HAP-1 (cell line): ENCODE measurements at regions of chr10 and their contacts with region 1.

Region 1: GRCh38 chr10:110151467-110151866 is 55.9 kb upstream of the MXI1 start:
- DNase-seq: no peak
- H3K4me3 ChIP-seq: no peak overlapping the region
- H3K4me1 ChIP-seq: no peaks in the 10 kb centered on the region
- H3K27me3 ChIP-seq: no peaks in the 10 kb centered on the region

Region 2: DNA sequence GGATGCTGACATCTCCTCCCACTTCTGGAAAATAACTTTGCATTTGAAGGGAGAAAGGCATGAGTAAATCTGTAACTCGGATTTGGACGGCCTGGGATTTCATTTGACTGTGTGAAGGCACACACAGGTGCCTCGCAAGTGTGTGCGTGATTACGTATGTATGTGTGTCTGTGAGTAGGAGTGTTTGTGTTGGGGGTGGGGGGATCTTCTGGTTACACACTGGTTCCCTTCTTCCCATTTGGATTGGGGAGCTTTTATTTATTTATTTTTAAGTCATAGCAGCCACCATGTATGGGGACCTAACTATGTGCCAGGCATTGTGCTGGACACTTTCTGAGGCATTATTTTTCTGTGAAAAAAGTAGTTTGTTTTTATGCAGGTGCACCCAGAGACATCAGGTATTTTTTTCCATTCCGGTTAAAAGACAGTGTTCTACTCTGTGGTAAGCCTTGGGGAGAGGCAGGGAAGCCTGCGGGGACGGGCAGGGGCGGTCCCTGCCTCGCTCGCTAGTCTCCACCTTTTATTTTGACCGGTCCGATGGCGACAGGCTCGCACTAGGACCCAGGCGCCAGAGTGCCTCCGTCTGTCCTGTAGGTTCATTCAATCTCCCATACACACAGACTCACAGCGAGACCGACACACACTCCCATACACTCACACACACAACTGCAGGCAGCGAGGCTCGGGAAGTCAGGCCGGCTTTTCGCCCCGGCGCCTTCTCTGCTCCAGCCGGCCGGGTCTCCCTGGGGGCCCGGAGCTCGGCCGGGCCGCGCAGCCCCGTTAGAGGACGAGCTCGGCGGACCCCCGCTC is 55.7 kb after region 1 on chr10 and contains the start of gene MXI1:
- in situ Hi-C with region 1: loop called (anchors 5 kb)
- DNase-seq: peak; percentile 87 to 90
- H3K4me3 ChIP-seq: peak within 1 kb of the TSS; percentile 65
- H3K4me1 ChIP-seq: peaks cover 12% of the 10 kb centered on the region
- H3K27me3 ChIP-seq: no peaks in the 10 kb centered on the region

Region 3: GRCh38 chr10:110273474-110273873 is 122.0 kb after region 1 on chr10:
- in situ Hi-C with region 1: no loop called
- DNase-seq: no peak
- H3K4me3 ChIP-seq: no peak overlapping the region
- H3K4me1 ChIP-seq: no peaks in the 10 kb centered on the region
- H3K27me3 ChIP-seq: no peaks in the 10 kb centered on the region